PC-3 (cell line): ENCODE measurements at regions of chr12 and their contacts with region 1.

Region 1: DNA sequence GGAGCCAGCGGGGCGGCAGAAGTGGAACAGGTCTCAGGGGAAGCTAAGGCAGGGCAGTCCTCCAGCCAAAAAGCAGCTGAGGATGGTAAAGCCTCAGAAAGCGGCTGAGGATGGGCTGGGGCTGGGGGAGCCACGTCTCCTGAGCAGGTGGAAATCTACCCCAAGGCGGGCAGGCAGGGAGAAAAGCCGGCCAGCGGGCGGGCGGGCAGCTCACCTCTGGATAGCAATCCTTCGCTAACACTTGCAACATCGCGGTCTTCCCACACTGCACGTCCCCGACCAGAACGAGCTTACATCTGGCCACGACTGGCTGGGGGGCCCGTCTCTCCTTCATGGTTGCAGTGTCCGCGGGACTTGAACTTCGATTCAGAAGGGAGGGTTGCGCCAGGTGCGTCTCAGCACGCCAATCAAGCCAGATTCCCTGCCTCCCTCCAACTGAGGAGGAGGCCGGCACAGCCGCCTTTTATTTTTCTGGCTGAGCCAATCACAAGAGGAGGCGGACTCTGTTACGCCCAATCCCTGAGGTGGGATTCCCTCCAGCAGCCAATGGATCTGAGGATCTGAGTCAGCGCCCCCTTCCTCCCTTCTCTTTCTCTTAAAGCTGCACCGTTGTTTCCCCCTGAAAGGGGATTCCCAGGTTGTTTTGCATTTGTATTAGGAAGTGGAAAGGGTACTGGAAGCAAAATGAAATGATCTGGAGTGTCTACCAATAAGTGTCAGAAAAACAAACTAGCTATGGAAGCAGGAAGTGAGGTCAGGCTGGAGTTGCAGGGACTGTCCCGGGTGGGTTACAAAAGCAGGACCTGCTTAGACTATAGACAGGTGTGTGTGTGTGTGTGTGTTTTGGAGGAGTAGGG is at the start of gene RND1:
- DNase-seq: peak; percentile 95
- ATAC-seq: peak; percentile 89
- H3K4me3 ChIP-seq: peak within 1 kb of the TSS; percentile 85
- H3K27ac ChIP-seq: peak within 1 kb of the TSS; percentile 80
- H3K4me1 ChIP-seq: peaks cover 20% of the 10 kb centered on the region
- H3K27me3 ChIP-seq: no peaks in the 10 kb centered on the region
- CTCF ChIP-seq: 0 out of 2 replicates have a peak, but pooled peaks have one; percentile 10
- total RNA-seq, gene RND1: 7.6 and 8.3 TPM in 2 replicates

Region 2: DNA sequence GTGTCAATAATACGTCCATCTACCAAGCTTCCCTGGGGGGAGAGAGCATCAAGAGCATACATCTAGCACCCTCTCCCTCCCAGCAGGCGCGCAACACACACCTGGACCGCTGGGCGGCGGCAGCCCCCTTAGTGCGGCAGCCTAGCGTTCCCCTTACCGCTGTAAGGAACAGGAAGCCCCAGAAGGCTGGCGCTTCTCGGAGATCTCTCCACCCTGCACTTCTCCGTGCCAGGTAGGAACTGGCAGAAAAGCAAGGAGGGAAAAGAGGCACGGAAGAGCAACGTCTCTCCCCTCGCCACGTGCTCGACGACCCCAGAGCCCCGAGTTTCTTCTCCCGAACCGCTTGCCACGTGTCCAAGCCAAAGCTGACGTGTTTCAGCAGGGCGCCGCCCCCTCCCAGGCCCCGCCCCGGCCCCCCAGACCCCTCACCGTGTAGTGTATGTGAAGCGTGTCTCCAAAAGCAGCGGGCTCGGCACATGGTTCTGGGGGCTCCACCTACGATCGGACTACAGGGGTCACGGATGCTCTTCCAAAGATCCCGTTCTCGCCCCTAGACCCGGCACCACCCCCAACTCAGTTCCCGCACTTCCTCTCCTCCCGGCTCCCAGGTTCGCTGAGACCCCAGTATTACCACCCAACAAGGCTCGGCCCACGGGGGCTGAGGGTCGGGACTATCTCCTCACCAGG is 59.1 kb after region 1 on chr12:
- CTCF ChIA-PET with region 1: no interaction called
- POLR2A ChIA-PET with region 1: interaction called, 10 read pairs
- intact Hi-C with region 1: no loop called
- DNase-seq: peak; percentile 44
- ATAC-seq: peak; percentile 54
- H3K4me3 ChIP-seq: peak overlapping the region; percentile 70
- H3K27ac ChIP-seq: no peak overlapping the region
- H3K4me1 ChIP-seq: no peaks in the 10 kb centered on the region
- H3K27me3 ChIP-seq: no peaks in the 10 kb centered on the region
- CTCF ChIP-seq: peak; percentile 49; the same call in 1 of the 2 replicates